ENCODE measurements at regions of chr15 and their contacts with region 1.

Region 1: DNA sequence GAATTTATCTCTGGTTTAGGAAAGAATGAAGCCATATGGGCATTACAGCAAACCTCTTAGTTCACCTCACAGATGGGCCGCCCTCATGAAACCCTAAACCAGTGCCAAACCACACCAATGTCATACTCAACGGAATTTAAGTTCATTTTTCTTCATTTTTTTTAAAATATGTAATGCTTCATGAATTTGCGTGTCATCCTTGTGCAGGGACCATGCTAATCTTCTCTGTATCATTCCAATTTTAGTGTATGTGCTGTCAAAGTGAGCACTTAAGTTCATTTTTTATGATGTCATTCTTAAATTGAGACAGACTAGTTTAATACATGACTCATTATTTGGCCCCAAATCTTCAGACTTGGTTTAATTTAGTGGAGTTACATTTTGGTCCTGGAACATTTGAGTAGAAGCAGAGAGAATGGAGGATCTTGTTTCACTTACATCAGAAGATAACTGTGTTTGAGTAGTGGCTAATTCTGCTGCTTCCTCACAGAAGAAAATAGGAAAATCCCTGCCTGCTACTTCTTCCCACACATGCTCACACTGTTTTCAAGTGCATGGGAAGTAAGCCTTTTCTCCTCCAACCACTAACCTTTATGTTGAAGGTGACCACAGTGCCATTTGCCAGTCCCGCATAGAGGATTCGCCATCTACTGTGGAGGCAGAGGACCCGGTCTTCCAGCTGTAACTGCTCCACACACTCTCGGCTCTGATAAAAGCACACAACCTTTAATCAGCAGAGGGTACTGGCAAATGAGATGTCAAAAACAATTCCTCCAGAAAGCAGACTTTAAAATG is 63.3 kb downstream of the ZNF106 start:
- DNase-seq: no peak
- H3K4me3 ChIP-seq: no peak overlapping the region
- H3K27ac ChIP-seq: no peak overlapping the region
- H3K4me1 ChIP-seq: no peaks in the 10 kb centered on the region
- H3K27me3 ChIP-seq: no peaks in the 10 kb centered on the region
- CTCF ChIP-seq: no peak

Region 2: GRCh38 chr15:42359986-42360385 is 67.6 kb before region 1 on chr15:
- intact Hi-C with region 1: loop called (anchors 10 kb)
- DNase-seq: no peak
- H3K4me3 ChIP-seq: no peak overlapping the region
- H3K27ac ChIP-seq: no peak overlapping the region
- H3K4me1 ChIP-seq: no peaks in the 10 kb centered on the region
- H3K27me3 ChIP-seq: no peaks in the 10 kb centered on the region
- CTCF ChIP-seq: no peak

Region 3: DNA sequence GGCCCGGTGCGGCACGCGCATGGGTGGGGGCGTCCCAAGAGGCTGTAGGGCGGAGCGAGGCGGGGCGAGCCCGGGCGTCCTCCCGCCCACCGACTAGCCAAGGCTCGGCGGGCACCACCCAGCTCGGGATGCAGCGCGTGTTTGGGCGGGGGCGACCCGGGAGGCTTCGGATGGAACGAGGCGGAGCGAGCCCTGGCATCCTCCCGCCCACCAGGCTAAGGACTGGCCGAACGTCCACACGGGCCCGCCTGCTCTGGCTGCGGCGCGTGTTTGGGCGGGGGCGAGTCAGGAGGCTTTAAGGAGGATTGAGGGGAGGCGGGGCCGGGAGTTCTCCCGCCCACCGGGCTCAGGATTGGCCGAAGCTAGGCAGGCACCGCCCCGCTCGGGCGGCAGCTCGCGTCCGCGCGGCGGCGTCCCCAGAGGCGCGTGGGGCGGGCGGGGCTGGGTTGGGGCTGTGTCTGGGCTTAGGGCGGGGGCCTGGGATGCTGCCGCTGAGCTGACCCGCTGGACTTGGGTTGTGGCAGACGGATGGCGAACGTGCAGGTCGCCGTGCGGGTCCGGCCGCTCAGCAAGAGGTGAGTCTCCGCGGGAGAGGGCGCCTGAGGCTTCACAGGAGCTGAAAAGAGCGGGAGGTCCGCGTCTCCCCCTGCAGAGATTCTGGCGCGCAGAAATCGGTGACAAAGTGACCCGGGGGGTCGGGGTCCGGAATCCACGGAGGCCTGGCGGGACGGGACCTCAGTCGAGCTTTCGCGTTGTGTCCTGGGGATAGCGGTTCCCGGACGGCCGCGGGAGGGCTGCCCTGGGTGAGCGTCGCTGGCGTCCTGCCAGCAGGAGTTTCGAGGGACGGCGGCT is 147.8 kb after region 1 on chr15 and contains the start of gene STARD9:
- intact Hi-C with region 1: no loop called
- DNase-seq: peak; percentile 99
- H3K4me3 ChIP-seq: peak within 1 kb of the TSS; percentile 45 to 80 (median 80)
- H3K27ac ChIP-seq: peak within 1 kb of the TSS; percentile 57 to 64
- H3K4me1 ChIP-seq: peaks cover 0 to 5% (median 5%) of the 10 kb centered on the region in 3 donors
- H3K27me3 ChIP-seq: no peaks in the 10 kb centered on the region
- CTCF ChIP-seq: no peak
- total RNA-seq, gene STARD9: 7.2 TPM

Measured in kidney (tissue), 22 donors.